ENCODE measurements at regions of chr4 and their contacts with region 1.

Region 1: DNA sequence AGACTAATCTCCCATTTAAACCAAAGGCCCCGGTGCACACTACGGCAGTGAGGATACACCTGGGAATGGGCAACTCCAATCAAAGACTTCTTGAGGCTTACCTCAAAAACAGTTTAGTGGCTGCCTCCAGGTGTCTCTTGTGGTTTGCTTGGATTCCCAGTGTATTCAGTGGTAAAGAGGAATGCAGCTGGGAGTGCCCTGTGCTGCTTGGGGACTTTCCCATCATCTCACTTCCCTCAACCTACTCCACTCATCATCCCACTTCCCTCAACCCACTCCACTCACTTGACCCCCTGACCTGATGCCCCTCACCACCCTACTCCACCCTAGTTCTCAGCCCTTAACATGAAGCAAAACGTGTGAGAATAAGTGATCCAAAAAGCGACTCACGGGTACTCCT is 177.3 kb upstream of the ETNPPL start:
- DNase-seq: no peak
- H3K4me3 ChIP-seq: no peak overlapping the region
- H3K27ac ChIP-seq: no peak overlapping the region
- H3K4me1 ChIP-seq: peaks cover 23% of the 10 kb centered on the region
- H3K27me3 ChIP-seq: no peaks in the 10 kb centered on the region
- CTCF ChIP-seq: no peak

Region 2: GRCh38 chr4:108926061-108926460 is 14.1 kb before region 1 on chr4:
- CTCF ChIA-PET with region 1: no interaction called
- POLR2A ChIA-PET with region 1: no interaction called
- intact Hi-C with region 1: no loop called
- DNase-seq: peak; percentile 22
- H3K4me3 ChIP-seq: no peak overlapping the region
- H3K27ac ChIP-seq: no peak overlapping the region
- H3K4me1 ChIP-seq: peaks cover 7% of the 10 kb centered on the region
- H3K27me3 ChIP-seq: no peaks in the 10 kb centered on the region
- CTCF ChIP-seq: no peak

Region 3: GRCh38 chr4:108972613-108973283 is 32.6 kb after region 1 on chr4:
- CTCF ChIA-PET with region 1: no interaction called
- POLR2A ChIA-PET with region 1: no interaction called
- intact Hi-C with region 1: no loop called
- DNase-seq: no peak
- H3K4me3 ChIP-seq: no peak overlapping the region
- H3K27ac ChIP-seq: no peak overlapping the region
- H3K4me1 ChIP-seq: no peaks in the 10 kb centered on the region
- H3K27me3 ChIP-seq: no peaks in the 10 kb centered on the region
- CTCF ChIP-seq: no peak

Region 4: DNA sequence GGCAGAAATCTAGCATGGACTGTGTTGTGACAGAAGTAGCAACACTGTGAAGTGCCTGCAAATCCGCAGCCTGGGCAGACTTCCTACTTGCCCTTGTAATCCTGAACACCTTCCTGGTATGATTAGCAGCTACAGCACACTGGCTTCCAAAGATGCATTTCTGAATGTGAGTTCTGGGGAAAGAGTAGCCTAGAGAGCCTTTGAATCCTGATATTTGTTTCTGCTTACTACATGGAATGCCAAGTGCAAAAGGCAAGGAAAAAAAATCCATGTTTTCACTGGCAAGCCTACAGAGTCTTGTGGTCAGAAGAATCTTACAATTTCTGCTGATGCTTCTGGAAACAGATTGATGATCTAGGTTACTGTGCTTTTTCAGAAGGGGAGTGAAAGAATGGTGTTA is 138.6 kb after region 1 on chr4:
- CTCF ChIA-PET with region 1: no interaction called
- POLR2A ChIA-PET with region 1: no interaction called
- intact Hi-C with region 1: loop called (anchors 10 kb)
- DNase-seq: peak; percentile 11
- H3K4me3 ChIP-seq: no peak overlapping the region
- H3K27ac ChIP-seq: no peak overlapping the region
- H3K4me1 ChIP-seq: peaks cover 23% of the 10 kb centered on the region
- H3K27me3 ChIP-seq: no peaks in the 10 kb centered on the region
- CTCF ChIP-seq: no peak

Region 5: GRCh38 chr4:109233585-109233984 is 293.4 kb after region 1 on chr4:
- CTCF ChIA-PET with region 1: no interaction called
- POLR2A ChIA-PET with region 1: no interaction called
- intact Hi-C with region 1: no loop called
- DNase-seq: no peak
- H3K4me3 ChIP-seq: no peak overlapping the region
- H3K27ac ChIP-seq: no peak overlapping the region
- H3K4me1 ChIP-seq: no peaks in the 10 kb centered on the region
- H3K27me3 ChIP-seq: no peaks in the 10 kb centered on the region
- CTCF ChIP-seq: no peak